Common myeloid progenitor, CD34-positive (primary cell): ENCODE measurements at regions of chr12 and their contacts with region 1.

Region 1: GRCh38 chr12:57111031-57111734 is at the start of gene STAT6:
- DNase-seq: peak; percentile 92 to 96 (median 94)
- H3K4me3 ChIP-seq: peak within 1 kb of the TSS; percentile 72 to 98 (median 90)
- H3K27ac ChIP-seq: peak within 1 kb of the TSS; percentile 85 to 95
- H3K4me1 ChIP-seq: peaks cover 6 to 37% (median 30%) of the 10 kb centered on the region in 4 experiments
- H3K27me3 ChIP-seq: no peaks in the 10 kb centered on the region

Region 2: GRCh38 chr12:57078519-57079404 is 32.4 kb before region 1 on chr12 and contains the start of gene NEMP1:
- CTCF ChIA-PET with region 1: interaction called, 835 read pairs
- POLR2A ChIA-PET with region 1: interaction called, 15 read pairs
- DNase-seq: peak; percentile 100
- H3K4me3 ChIP-seq: peak within 1 kb of the TSS; percentile 41 to 96 (median 92)
- H3K27ac ChIP-seq: peak within 1 kb of the TSS; percentile 70 to 90
- H3K4me1 ChIP-seq: peaks cover 7 to 27% (median 22%) of the 10 kb centered on the region in 4 experiments
- H3K27me3 ChIP-seq: no peaks in the 10 kb centered on the region

Region 3: GRCh38 chr12:57088459-57089248 is 22.5 kb before region 1 on chr12 and contains the start of gene NAB2:
- CTCF ChIA-PET with region 1: interaction called, 835 read pairs
- POLR2A ChIA-PET with region 1: interaction called, 42 read pairs
- DNase-seq: peak; percentile 93 to 98 (median 97)
- H3K4me3 ChIP-seq: peak within 1 kb of the TSS; percentile 75 to 97 (median 90)
- H3K27ac ChIP-seq: peak within 1 kb of the TSS; percentile 95 to 99
- H3K4me1 ChIP-seq: peaks cover 3 to 45% (median 39%) of the 10 kb centered on the region in 4 experiments
- H3K27me3 ChIP-seq: no peaks in the 10 kb centered on the region

Region 4: DNA sequence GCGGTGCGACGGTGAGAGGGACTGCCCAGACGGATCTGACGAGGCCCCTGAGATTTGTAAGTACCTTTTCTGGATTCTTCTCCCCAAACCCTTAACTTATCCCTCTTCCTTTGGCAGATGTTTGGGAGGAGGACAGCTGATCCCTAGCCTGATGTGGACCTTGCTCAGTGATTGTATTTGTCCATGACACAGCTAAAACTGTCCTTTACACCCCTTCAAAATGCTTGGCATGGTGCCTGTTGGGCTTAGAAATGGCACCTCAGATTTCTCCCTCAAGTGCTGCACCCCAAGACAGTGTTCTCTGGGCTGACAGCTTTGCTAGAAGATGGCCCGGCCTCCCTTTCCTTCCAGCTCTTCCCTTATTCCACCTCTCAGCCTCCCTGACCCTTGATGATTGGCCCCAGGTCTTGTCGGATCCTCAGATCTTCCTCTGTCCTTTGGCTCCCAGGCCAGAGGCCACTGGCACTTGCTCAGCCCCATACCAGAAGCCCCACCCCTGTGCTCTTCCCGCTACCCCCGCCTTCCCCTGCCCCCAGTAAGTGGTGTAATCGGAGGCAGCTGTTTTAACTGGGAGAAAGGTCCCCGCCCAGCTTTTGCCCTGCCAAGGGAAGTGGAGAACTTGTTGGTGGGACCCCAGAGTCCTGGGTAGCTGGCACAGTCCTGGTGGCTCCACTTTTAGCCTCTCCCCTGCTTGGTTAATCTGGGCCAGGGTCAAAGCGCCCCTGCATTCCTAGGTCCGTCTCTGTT is 27.5 kb after region 1 on chr12:
- CTCF ChIA-PET with region 1: no interaction called
- POLR2A ChIA-PET with region 1: no interaction called
- DNase-seq: no peak
- H3K4me3 ChIP-seq: no peak overlapping the region
- H3K27ac ChIP-seq: no peak overlapping the region
- H3K4me1 ChIP-seq: peaks cover 0 to 4% (median 0%) of the 10 kb centered on the region in 4 experiments
- H3K27me3 ChIP-seq: peaks cover 0 to under 1% (median 0%) of the 10 kb centered on the region in 5 experiments

Region 5: DNA sequence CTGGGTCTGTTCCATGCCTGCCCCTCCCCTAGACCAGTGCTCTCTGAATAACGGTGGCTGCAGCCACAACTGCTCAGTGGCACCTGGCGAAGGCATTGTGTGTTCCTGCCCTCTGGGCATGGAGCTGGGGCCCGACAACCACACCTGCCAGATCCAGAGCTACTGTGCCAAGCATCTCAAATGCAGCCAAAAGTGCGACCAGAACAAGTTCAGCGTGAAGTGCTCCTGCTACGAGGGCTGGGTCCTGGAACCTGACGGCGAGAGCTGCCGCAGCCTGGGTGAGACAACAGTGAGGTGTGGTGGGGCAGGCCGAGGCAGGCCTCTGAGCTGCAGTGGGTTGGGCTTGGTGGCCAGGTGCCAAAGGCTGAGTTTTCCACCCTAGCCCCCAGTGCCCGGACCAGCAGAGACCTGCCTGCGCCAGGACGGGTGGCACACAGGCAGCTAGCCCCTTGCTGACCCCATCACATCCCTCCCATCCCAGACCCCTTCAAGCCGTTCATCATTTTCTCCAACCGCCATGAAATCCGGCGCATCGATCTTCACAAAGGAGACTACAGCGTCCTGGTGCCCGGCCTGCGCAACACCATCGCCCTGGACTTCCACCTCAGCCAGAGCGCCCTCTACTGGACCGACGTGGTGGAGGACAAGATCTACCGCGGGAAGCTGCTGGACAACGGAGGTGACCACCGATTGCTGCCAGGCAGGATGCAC is 64.4 kb after region 1 on chr12:
- CTCF ChIA-PET with region 1: interaction called, 399 read pairs
- POLR2A ChIA-PET with region 1: no interaction called
- DNase-seq: peak; percentile 18 to 50 (median 33)
- H3K4me3 ChIP-seq: no peak overlapping the region
- H3K27ac ChIP-seq: no peak overlapping the region
- H3K4me1 ChIP-seq: no peaks in the 10 kb centered on the region
- H3K27me3 ChIP-seq: peaks cover 0 to 1% (median 0%) of the 10 kb centered on the region in 5 experiments

Region 6: GRCh38 chr12:57182921-57183790 is 72.0 kb after region 1 on chr12:
- CTCF ChIA-PET with region 1: interaction called, 350 read pairs
- POLR2A ChIA-PET with region 1: interaction called, 4 read pairs
- DNase-seq: peak; percentile 49 to 75 (median 63)
- H3K4me3 ChIP-seq: no peak overlapping the region
- H3K27ac ChIP-seq: no peak overlapping the region
- H3K4me1 ChIP-seq: no peaks in the 10 kb centered on the region
- H3K27me3 ChIP-seq: peaks cover 0 to 3% (median 0%) of the 10 kb centered on the region in 5 experiments